ENCODE measurements at regions of chr12 and their contacts with region 1.

Region 1: DNA sequence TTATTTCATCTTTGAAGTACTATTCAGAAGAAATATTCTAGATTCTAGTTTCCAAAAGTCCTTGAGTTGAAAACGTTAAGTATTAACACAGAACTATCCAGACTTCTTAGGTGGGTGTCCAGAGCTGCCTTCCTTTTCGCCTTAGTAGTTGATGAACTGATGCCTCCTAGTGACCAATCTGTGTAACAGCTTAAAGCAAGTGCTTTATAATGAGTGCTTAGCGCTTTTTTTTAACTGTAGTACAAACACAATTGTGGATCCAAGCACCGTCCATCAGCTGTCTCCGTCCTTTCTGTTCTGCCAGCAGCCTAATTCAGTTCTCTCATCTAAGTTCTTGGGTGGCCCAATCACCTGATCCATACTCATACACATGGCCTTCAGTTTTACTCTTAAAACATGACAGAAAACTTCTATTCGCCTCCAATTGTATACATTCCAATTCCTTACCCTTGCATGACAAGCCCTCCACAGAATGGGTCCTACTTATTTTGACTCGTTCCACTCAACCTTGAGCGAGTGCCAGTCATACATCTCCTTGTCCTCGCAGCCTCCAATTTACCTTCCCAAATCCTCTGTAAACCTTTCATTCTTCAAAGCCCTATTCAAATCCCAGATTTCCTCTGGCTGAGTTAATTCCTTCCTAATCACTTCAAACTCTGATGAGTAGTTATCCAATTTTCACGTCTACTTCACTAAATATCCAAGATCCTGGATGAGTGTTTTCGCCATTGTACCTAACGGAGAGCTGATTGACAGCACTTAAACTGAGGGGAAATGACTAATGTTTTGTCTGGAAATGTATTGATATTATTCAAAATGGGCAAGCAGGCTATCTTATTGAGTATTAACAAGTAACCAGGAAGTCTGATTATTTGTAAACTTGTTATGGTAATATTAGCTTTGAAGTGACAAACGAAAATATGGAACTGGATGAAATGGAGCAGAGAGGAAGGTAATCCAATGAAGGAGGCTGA is 5.8 kb upstream of the PHLDA1 start:
- DNase-seq: peak in 4 of 9 experiments; percentile 27 to 82 (median 52)
- ATAC-seq: peak; percentile 91
- H3K4me3 ChIP-seq: no peak overlapping the region
- H3K4me3 Mint-ChIP-seq: no peak overlapping the region
- H3K27ac ChIP-seq: no peak overlapping the region
- H3K27ac Mint-ChIP-seq: no peak overlapping the region
- H3K4me1 ChIP-seq: peaks cover 3% of the 10 kb centered on the region
- H3K4me1 Mint-ChIP-seq: peaks cover 13% of the 10 kb centered on the region
- H3K27me3 ChIP-seq: no peaks in the 10 kb centered on the region
- H3K27me3 Mint-ChIP-seq: no peaks in the 10 kb centered on the region
- CTCF ChIP-seq: peak; percentile 79

Region 2: GRCh38 chr12:75334384-75335030 is 702.9 kb before region 1 on chr12 and contains the start of gene GLIPR1L1:
- CTCF ChIA-PET with region 1: interaction called, 8 read pairs
- POLR2A ChIA-PET with region 1: no interaction called
- intact Hi-C with region 1: loop called (anchors 1 to 2 kb)
- DNase-seq: peak; percentile 69 to 88 (median 84)
- ATAC-seq: peak; percentile 81
- H3K4me3 ChIP-seq: peak within 1 kb of the TSS; percentile 28 to 34
- H3K4me3 Mint-ChIP-seq: peak within 1 kb of the TSS; percentile 62
- H3K27ac ChIP-seq: no peak within 1 kb of the TSS
- H3K27ac Mint-ChIP-seq: no peak within 1 kb of the TSS
- H3K4me1 ChIP-seq: peaks cover 11% of the 10 kb centered on the region
- H3K4me1 Mint-ChIP-seq: peaks cover 15% of the 10 kb centered on the region
- H3K27me3 ChIP-seq: peaks cover 0 to 4% of the 10 kb centered on the region in 2 experiments
- H3K27me3 Mint-ChIP-seq: peaks cover 24% of the 10 kb centered on the region
- CTCF ChIP-seq: peak; percentile 89
- total RNA-seq, gene GLIPR1L1: not detected

Region 3: GRCh38 chr12:75505706-75506312 is 531.6 kb before region 1 on chr12:
- CTCF ChIA-PET with region 1: interaction called, 4 read pairs
- POLR2A ChIA-PET with region 1: interaction called, 15 read pairs
- intact Hi-C with region 1: loop called (anchors 5 kb)
- DNase-seq: peak in 2 of 9 experiments; percentile 41 to 55
- ATAC-seq: peak; percentile 63
- H3K4me3 ChIP-seq: no peak overlapping the region
- H3K4me3 Mint-ChIP-seq: no peak overlapping the region
- H3K27ac ChIP-seq: no peak overlapping the region
- H3K27ac Mint-ChIP-seq: no peak overlapping the region
- H3K4me1 ChIP-seq: peaks cover 13% of the 10 kb centered on the region
- H3K4me1 Mint-ChIP-seq: peaks cover 26% of the 10 kb centered on the region
- H3K27me3 ChIP-seq: no peaks in the 10 kb centered on the region
- H3K27me3 Mint-ChIP-seq: no peaks in the 10 kb centered on the region
- CTCF ChIP-seq: peak; percentile 84

Region 4: DNA sequence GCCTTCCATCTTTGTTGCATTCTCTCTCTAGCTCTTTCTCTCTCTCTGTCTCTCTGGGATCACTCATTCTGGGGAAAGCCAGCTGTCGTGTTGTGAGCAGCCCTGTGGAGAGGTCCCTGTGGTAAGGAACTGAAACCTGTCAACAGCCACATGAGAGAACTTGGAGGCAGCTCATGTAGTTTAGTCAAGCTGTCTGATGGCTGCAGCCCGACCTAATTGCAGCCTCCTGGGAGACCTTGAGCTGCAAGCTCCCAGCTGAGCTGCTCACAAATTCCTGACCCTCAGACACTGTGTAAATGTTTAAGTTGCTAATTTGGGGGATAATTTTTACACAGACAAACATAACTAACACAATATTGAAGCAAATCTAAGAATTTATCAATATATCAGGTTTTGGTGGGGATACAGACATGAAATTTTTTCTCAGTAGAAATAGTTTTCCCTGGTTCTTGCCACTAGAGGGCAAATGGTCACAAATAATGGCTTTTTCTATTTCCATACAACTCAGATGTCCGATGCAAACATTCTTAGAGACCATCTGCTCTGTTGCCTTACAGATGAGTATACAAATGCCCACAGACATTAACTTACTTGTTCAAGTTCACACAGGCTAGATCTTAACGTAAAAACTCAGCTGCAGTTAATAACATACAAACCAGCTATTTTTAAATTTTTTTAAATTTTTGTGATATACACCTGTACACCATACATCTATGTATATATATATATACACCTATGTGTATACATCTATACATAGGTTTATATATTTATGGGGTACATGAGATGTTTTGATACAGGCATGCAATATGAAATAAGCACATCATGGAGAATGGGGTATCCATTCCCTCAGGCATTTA is 510.5 kb before region 1 on chr12:
- CTCF ChIA-PET with region 1: interaction called, 23 read pairs
- POLR2A ChIA-PET with region 1: no interaction called
- intact Hi-C with region 1: loop called (anchors 1 to 2 kb)
- DNase-seq: peak in 2 of 9 experiments; percentile 45 to 60
- ATAC-seq: no peak
- H3K4me3 ChIP-seq: no peak overlapping the region
- H3K4me3 Mint-ChIP-seq: no peak overlapping the region
- H3K27ac ChIP-seq: no peak overlapping the region
- H3K27ac Mint-ChIP-seq: no peak overlapping the region
- H3K4me1 ChIP-seq: no peaks in the 10 kb centered on the region
- H3K4me1 Mint-ChIP-seq: peaks cover 1% of the 10 kb centered on the region
- H3K27me3 ChIP-seq: peaks cover 0 to 4% of the 10 kb centered on the region in 2 experiments
- H3K27me3 Mint-ChIP-seq: peaks cover 17% of the 10 kb centered on the region
- CTCF ChIP-seq: peak; percentile 60

Region 5: GRCh38 chr12:75722714-75723200 is 314.7 kb before region 1 on chr12:
- CTCF ChIA-PET with region 1: no interaction called
- POLR2A ChIA-PET with region 1: no interaction called
- intact Hi-C with region 1: loop called (anchors 5 to 10 kb)
- DNase-seq: peak in 8 of 9 experiments; percentile 8 to 63 (median 36)
- ATAC-seq: peak; percentile 81
- H3K4me3 ChIP-seq: no peak overlapping the region
- H3K4me3 Mint-ChIP-seq: no peak overlapping the region
- H3K27ac ChIP-seq: no peak overlapping the region
- H3K27ac Mint-ChIP-seq: no peak overlapping the region
- H3K4me1 ChIP-seq: peaks cover 18% of the 10 kb centered on the region
- H3K4me1 Mint-ChIP-seq: peaks cover 12% of the 10 kb centered on the region
- H3K27me3 ChIP-seq: no peaks in the 10 kb centered on the region
- H3K27me3 Mint-ChIP-seq: peaks cover 7% of the 10 kb centered on the region
- CTCF ChIP-seq: no peak

Region 6: GRCh38 chr12:75814851-75815754 is 222.3 kb before region 1 on chr12:
- CTCF ChIA-PET with region 1: no interaction called
- POLR2A ChIA-PET with region 1: no interaction called
- intact Hi-C with region 1: loop called (anchors 1 to 5 kb)
- DNase-seq: peak in 2 of 9 experiments; percentile 50 to 59
- ATAC-seq: peak; percentile 46
- H3K4me3 ChIP-seq: no peak overlapping the region
- H3K4me3 Mint-ChIP-seq: no peak overlapping the region
- H3K27ac ChIP-seq: no peak overlapping the region
- H3K27ac Mint-ChIP-seq: no peak overlapping the region
- H3K4me1 ChIP-seq: no peaks in the 10 kb centered on the region
- H3K4me1 Mint-ChIP-seq: peaks cover 4% of the 10 kb centered on the region
- H3K27me3 ChIP-seq: no peaks in the 10 kb centered on the region
- H3K27me3 Mint-ChIP-seq: peaks cover 3% of the 10 kb centered on the region
- CTCF ChIP-seq: no peak